Right ventricle myocardium superior (tissue), 1 donor: ENCODE measurements at regions of chr9 and their contacts with region 1.

Region 1: GRCh38 chr9:94014065-94014654 is 59.0 kb upstream of the BARX1 start:
- DNase-seq: no peak
- ATAC-seq: no peak

Region 2: GRCh38 chr9:94213511-94214124 is 199.5 kb after region 1 on chr9:
- intact Hi-C with region 1: loop called (anchors 5 kb)
- DNase-seq: peak; percentile 72
- ATAC-seq: peak; percentile 97